Activated naive CD4-positive, alpha-beta T cell treated with anti-CD3 and anti-CD28 coated beads for 36 hours (primary cell): ENCODE measurements at regions of chrX and their contacts with region 1.

Region 1: DNA sequence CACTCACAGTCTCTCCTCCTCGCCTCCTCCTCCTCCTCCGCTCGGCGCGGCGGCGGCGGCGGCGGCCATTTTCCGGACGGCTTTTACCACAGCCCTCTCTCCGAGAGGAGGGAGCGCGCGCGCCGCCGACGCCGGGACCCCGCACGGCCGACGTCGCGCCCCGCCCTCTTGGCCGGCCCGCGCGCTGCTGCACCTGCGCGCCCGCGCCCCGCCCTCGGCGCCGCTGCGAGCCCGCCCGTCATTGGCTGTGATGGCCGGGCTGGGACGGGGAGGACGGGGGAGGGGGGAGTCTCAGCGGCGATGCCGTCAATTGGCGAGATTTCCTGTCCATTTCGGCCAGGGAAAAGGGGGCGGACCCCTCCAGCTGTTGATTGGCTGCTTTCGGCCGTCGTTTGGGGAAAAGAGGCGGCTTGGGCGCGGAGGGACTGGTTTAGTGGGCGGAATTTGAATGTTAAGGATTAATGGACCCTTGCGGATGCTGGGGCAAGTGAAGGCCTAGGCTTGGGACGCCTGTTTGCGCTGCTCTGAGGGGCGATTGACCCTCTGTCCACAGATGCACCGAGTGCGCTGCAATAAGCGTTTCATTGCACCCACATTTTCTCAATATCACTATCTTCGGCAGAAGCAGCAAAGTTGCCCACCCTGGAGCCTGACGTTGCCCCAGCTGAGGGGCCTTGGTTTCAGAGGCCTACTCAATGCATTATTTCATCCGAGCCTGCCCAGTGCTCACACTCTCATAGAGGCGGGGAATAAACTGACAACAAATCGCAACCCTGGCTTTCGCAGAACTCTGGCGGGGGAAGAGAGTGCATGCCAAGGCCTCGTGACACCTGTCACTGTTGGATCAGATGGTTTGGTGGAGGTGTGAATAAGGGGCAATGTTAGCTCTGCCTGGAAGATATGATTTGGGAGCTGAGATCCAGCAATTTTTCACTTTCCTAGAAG is at the start of gene MECP2:
- DNase-seq: peak; percentile 94
- H3K4me3 Mint-ChIP-seq: peak within 1 kb of the TSS; percentile 89
- H3K27ac Mint-ChIP-seq: peak within 1 kb of the TSS; percentile 94
- H3K4me1 Mint-ChIP-seq: peaks cover 44% of the 10 kb centered on the region
- H3K27me3 Mint-ChIP-seq: no peaks in the 10 kb centered on the region
- total RNA-seq, gene MECP2: 47.1 to 50.2 TPM

Region 2: DNA sequence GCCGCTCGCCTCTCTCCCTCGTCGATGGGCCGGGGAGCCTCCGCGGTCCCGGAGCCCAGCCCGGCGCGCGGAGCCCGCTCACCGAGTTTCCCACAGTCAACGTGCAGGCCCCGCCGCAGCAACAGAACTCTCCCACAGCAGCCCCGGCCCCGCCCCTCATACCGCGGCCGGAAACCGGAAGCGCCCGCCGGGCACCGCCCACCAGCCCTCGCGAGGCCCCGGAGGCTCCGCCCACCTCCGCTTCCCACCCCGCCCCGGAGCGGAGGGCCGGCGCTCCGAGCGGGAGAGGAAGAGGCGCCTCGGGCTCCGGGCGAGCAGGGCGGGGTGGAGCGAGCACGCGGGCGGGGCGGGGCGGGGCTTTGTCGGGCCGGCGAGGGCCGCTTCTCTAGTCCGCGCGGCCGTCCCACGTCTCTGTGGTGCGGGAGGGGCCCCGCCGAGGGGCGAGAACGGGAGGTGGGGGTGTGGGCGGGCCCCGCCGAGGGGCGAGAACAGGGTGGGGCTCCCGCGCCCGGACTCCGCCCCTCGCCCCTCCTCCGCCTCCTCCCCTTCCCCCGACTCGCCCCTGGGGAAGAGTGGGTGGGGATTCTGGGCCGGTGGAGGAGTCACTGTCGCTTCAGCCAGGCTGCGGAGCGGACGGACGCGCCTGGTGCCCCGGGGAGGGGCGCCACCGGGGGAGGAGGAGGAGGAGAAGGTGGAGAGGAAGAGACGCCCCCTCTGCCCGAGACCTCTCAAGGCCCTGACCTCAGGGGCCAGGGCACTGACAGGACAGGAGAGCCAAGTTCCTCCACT is 373.4 kb before region 1 on chrX and contains the starts of genes ABCD1 and BCAP31:
- CTCF ChIA-PET with region 1: no interaction called
- intact Hi-C with region 1: loop called (anchors 5 kb)
- DNase-seq: peak; percentile 88
- H3K4me3 Mint-ChIP-seq: peak within 1 kb of the TSS; percentile 85
- H3K27ac Mint-ChIP-seq: peak within 1 kb of the TSS; percentile 81
- H3K4me1 Mint-ChIP-seq: peaks cover 25% of the 10 kb centered on the region
- H3K27me3 Mint-ChIP-seq: no peaks in the 10 kb centered on the region
- total RNA-seq, gene ABCD1: 2.5 to 3.4 TPM
- total RNA-seq, gene BCAP31: 69.5 to 71.2 TPM

Region 3: DNA sequence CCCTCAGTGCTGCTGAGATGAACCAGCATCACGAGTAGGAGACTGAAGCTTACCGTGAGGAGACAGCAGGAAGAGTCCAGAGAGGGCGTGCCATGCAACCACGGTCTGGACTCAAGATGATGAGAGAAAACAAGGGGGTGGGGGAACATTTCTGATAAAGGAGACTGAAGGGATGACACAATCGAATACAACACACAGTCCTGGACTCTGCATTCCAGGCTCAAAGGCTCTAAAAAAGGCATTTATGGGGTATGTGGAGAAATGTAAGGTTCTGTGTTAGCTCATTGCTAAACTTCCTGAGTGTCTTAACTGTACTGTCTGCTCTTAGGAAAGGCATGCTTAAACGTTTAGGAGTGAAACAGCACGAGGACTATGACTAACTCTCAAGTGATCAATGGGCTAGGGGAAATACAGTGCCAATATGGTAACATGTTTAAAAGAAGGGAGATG is 57.5 kb before region 1 on chrX:
- CTCF ChIA-PET with region 1: no interaction called
- intact Hi-C with region 1: loop called (anchors 5 kb)
- DNase-seq: no peak
- H3K4me3 Mint-ChIP-seq: no peak overlapping the region
- H3K27ac Mint-ChIP-seq: peak overlapping the region; percentile 66
- H3K4me1 Mint-ChIP-seq: peaks cover 37% of the 10 kb centered on the region
- H3K27me3 Mint-ChIP-seq: no peaks in the 10 kb centered on the region

Region 4: GRCh38 chrX:154136627-154137161 is 38.8 kb after region 1 on chrX:
- CTCF ChIA-PET with region 1: interaction called, 5 read pairs
- intact Hi-C with region 1: loop called (anchors 1 kb)
- DNase-seq: peak; percentile 57
- H3K4me3 Mint-ChIP-seq: peak overlapping the region; percentile 75
- H3K27ac Mint-ChIP-seq: peak overlapping the region; percentile 80
- H3K4me1 Mint-ChIP-seq: peaks cover 11% of the 10 kb centered on the region
- H3K27me3 Mint-ChIP-seq: no peaks in the 10 kb centered on the region